BJ (cell line): ENCODE measurements at regions of chr1 and their contacts with region 1.

Region 1: GRCh38 chr1:8396786-8397406 is 79.0 kb downstream of the SLC45A1 start:
- DNase-seq: peak; percentile 94
- H3K4me3 ChIP-seq: no peak overlapping the region
- H3K27me3 ChIP-seq: no peaks in the 10 kb centered on the region
- CTCF ChIP-seq: no peak

Region 2: DNA sequence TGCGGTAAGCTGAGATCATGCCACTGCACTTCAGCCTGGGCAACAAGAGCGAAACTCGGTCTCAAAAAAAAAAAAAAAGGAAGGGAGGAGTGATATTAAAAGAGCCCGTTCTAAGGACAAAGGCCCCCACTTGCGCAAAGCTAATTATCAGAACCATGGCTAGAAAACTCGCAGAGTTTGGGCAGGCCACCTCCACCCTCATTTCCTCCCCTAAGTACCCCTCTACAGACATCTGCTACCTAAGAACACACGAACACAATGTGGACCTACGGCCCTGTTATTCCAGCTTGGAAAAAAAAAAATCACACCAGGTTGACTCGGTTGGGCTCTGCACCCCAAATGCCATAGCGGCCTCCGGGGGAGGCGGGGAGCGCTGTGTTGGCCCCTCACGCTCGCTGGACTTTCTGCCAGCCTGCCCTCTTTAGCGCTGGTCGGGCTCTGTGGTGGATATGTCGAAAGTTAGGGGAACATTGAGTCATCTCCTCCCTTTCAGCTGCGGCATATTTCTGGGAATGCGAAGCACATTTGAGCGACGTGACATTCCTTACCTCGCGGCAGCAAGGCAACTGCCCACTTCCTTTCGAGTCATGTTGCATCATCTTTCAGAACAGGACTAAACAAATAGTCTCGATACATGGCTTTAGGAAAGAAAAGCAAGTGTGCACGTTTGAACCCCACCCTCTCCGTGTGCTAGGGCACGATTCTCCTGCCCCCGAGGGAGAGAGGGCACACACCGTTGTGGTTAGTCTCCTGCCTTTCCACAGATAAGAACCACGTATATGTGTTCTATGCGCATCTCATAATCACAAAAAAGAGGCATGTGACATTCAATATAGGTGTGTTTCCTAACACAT is 185.1 kb before region 1 on chr1:
- CTCF ChIA-PET with region 1: no interaction called
- POLR2A ChIA-PET with region 1: no interaction called
- DNase-seq: peak; percentile 94
- H3K4me3 ChIP-seq: no peak overlapping the region
- H3K27me3 ChIP-seq: no peaks in the 10 kb centered on the region
- CTCF ChIP-seq: no peak

Region 3: DNA sequence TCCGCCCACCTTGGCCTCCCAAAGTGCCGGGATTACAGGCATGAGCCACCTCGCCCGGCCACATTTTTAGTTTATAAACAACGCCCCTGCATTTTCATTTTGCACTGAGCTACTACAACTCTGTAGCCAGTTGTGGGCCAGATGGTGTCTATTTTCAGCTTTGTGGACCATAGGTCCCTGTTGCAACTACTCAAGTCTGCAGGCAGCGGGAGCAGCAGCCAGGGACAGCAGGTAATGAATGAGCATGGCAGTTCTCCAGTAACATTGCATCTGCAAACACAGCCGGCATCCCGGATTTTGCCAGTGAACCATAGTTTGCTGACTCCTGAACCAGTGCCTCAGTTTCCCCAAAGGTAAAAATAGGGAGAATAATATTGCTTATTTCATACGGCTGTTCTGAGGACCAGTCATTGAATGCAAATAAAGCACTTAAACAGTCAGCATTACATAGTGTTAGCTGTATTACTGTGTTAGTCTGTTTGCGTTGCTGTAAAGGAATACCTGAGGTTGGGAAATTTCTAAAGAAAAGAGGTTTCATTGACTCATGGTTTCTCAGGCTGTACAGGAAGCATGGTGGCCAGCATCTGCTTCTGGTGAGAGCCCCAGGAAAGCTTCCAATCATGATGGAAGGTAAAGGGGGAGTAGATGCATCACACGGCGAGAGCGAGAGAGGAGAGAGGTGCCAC is 144.5 kb before region 1 on chr1:
- CTCF ChIA-PET with region 1: no interaction called
- POLR2A ChIA-PET with region 1: no interaction called
- DNase-seq: no peak
- H3K4me3 ChIP-seq: no peak overlapping the region
- H3K27me3 ChIP-seq: no peaks in the 10 kb centered on the region
- CTCF ChIP-seq: no peak

Region 4: GRCh38 chr1:8364528-8365442 is 32.1 kb before region 1 on chr1:
- CTCF ChIA-PET with region 1: no interaction called
- POLR2A ChIA-PET with region 1: no interaction called
- DNase-seq: no peak
- H3K4me3 ChIP-seq: no peak overlapping the region
- H3K27me3 ChIP-seq: no peaks in the 10 kb centered on the region
- CTCF ChIP-seq: no peak

Region 5: GRCh38 chr1:8409106-8409505 is 12.2 kb after region 1 on chr1:
- CTCF ChIA-PET with region 1: interaction called, 16 read pairs
- POLR2A ChIA-PET with region 1: no interaction called
- DNase-seq: no peak
- H3K4me3 ChIP-seq: no peak overlapping the region
- H3K27me3 ChIP-seq: no peaks in the 10 kb centered on the region
- CTCF ChIP-seq: peak; percentile 59